Endothelial cell of umbilical vein (primary cell): ENCODE measurements at regions of chr16 and their contacts with region 1.

Region 1: DNA sequence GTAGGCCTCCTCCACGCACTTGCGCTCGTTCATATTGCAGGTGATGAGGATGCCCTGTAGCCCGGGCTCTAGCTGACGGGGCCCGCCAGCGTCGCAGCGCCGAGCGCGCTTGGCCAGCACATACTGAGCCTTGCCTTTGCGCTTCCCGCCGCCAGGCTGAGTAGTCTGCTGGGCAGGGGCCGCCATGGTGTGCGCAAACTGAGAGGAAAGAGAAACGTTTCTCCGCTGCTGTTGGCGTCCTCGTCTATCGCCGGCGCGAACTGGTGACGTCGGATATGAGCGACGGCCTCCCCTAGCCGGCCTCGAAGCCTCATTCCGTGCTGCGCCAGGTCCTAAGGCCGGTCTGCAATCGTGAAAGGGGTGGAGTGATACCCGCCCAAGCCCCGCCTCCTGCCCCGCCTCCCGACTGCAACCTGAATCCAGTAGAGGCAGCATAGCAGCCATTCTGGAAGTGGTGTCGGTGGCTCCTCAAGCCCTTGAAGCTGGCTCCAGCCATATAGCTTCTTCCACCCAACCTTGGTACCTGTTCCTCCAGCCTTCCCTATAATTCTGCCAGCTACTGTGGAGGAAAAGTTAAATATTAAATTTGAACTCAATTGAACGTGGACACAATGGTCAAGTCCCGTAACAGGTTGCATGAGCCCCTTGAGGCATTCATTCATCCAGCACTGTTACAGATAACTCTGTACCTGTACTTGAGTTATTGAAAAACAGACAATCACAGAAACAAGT is at the start of gene THUMPD1:
- DNase-seq: peak; percentile 95
- H3K4me3 ChIP-seq: peak within 1 kb of the TSS; percentile 66 to 98 (median 91)
- H3K27ac ChIP-seq: peak within 1 kb of the TSS; percentile 74
- H3K4me1 ChIP-seq: peaks cover 10% of the 10 kb centered on the region
- H3K27me3 ChIP-seq: no peaks in the 10 kb centered on the region
- CTCF ChIP-seq: peak; percentile 9 to 25
- POLR2A ChIP-seq: peak; percentile 69
- total RNA-seq, gene THUMPD1: 29.0 and 30.7 TPM in 2 replicates

Region 2: DNA sequence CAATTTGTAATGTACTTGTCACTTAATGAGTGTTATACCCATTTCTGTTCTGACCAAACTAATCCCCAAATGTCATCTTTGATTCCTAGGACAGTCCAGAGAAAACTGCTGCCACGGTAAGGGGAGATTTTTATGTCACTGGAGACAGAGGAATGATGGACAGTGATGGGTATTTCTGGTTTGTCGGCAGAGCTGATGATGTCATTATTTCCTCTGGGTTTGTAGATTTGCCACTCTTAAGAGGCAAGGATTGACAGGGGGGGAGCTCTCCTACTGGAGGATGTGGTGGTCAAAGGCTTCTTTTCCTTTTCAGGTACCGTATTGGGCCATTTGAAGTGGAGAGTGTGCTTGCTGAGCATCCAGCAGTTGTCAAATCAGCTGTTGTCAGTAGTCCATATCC is 12.6 kb before region 1 on chr16:
- CTCF ChIA-PET with region 1: interaction called, 12 read pairs
- POLR2A ChIA-PET with region 1: no interaction called
- dilution Hi-C with region 1: no loop called
- intact Hi-C with region 1: no loop called
- DNase-seq: no peak
- H3K4me3 ChIP-seq: no peak overlapping the region
- H3K27ac ChIP-seq: no peak overlapping the region
- H3K4me1 ChIP-seq: no peaks in the 10 kb centered on the region
- H3K27me3 ChIP-seq: no peaks in the 10 kb centered on the region
- CTCF ChIP-seq: no peak
- POLR2A ChIP-seq: no peak

Region 3: GRCh38 chr16:20753727-20754126 is 12.0 kb after region 1 on chr16:
- CTCF ChIA-PET with region 1: no interaction called
- POLR2A ChIA-PET with region 1: no interaction called
- dilution Hi-C with region 1: no loop called
- intact Hi-C with region 1: no loop called
- DNase-seq: no peak
- H3K4me3 ChIP-seq: no peak overlapping the region
- H3K27ac ChIP-seq: no peak overlapping the region
- H3K4me1 ChIP-seq: no peaks in the 10 kb centered on the region
- H3K27me3 ChIP-seq: peaks cover 0 to 3% of the 10 kb centered on the region in 2 experiments
- CTCF ChIP-seq: no peak
- POLR2A ChIP-seq: no peak

Region 4: DNA sequence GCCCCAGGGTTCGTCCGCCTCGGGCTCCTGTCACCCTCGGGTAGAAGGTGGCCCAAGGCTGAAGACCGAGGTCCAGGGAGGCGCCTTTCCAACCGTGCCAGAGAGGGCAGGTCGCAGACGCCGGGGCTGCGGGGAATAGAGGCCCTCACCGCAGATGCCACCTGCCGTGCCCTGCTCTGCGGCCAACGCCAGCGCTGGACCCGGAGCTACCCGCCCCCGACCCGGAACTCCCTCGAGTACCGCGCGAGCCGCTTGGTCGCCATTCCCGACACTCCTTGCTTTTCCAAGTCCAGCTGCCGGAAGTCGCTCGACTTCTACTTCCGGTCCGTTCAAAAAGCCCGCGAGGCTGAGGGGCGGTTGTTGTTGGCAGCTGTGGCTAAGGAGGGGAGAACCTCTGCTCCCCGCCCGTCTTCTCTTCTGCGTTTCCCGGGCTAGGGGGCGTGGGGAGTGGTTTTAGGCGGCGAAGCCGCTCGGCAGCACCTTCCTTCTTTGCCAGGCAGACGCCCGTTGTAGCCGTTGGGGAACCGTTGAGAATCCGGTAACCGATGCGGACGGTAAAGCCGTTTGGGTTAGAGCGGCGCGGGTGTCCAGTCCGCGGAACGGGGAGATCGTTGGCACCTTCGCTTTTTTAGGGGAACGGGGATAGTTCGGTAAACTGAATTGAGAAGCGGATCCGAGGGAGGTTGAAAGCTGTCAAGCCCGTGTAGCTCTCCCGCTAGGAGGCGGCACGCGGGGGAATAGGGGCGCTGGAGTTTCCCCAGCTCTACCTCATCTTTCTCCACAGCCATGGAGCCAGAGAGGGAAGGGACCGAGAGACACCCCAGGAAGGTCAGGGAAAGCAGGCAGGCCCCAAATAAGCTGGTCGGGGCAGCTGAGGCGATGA is 64.7 kb after region 1 on chr16 and contains the starts of genes ERI2 and REXO5:
- CTCF ChIA-PET with region 1: interaction called, 3 read pairs
- POLR2A ChIA-PET with region 1: no interaction called
- dilution Hi-C with region 1: no loop called
- intact Hi-C with region 1: loop called (anchors 1 kb)
- DNase-seq: peak; percentile 94
- H3K4me3 ChIP-seq: peak within 1 kb of the TSS; percentile 44 to 68 (median 50)
- H3K27ac ChIP-seq: peak within 1 kb of the TSS; percentile 49
- H3K4me1 ChIP-seq: peaks cover 8% of the 10 kb centered on the region
- H3K27me3 ChIP-seq: no peaks in the 10 kb centered on the region
- CTCF ChIP-seq: peak; percentile 36 to 66
- POLR2A ChIP-seq: peak; percentile 76
- total RNA-seq, gene ERI2: 8.9 and 9.3 TPM in 2 replicates
- total RNA-seq, gene REXO5: 7.4 and 11.5 TPM in 2 replicates